ENCODE measurements at regions of chr19 and their contacts with region 1.

Region 1: DNA sequence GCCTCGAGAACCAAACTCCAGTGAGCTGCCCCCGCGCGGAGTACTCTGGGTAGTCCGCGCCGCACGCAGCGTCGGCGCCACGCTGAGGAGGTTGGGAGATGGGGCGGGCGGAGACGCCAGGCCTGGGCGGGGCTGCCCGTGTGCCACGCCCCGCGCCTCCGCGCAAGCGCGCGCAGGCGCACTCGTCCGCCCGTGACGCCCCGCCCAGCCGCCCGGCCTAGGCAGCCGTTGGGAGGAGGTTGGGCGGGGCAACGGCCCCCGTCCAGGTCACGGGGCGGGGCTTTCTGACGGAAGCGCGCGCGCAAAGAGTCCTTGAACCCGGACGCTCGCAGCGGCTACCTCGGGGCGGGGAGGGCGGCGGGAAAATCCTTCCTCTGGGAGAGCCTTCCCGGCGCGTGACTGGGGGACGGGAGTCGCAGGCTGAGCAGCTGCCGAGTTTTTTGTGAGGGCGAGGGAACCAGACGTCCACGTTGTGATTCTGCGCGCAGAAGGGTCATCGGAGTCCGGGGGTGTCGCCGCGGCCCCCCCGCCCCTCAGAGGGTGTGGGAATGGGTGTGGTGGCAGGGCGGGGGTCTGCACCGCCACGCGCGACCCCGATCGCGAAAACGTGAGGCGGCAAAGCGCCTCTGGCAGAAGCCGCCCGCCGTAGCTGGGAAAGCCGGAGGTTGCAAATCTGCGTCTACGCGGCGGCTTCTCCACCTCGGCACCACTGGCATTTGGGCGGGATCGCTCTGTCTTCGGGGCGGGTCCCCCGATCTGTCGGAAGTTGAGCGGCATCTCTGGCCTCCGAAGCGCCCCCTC is at the start of gene MED26:
- DNase-seq: peak; percentile 91 to 95 (median 94)
- H3K4me3 ChIP-seq: peak within 1 kb of the TSS; percentile 82 to 99 (median 89)
- H3K27ac ChIP-seq: peak within 1 kb of the TSS; percentile 77 to 89
- H3K4me1 ChIP-seq: peaks cover 6 to 26% (median 21%) of the 10 kb centered on the region in 4 experiments
- H3K27me3 ChIP-seq: no peaks in the 10 kb centered on the region

Region 2: DNA sequence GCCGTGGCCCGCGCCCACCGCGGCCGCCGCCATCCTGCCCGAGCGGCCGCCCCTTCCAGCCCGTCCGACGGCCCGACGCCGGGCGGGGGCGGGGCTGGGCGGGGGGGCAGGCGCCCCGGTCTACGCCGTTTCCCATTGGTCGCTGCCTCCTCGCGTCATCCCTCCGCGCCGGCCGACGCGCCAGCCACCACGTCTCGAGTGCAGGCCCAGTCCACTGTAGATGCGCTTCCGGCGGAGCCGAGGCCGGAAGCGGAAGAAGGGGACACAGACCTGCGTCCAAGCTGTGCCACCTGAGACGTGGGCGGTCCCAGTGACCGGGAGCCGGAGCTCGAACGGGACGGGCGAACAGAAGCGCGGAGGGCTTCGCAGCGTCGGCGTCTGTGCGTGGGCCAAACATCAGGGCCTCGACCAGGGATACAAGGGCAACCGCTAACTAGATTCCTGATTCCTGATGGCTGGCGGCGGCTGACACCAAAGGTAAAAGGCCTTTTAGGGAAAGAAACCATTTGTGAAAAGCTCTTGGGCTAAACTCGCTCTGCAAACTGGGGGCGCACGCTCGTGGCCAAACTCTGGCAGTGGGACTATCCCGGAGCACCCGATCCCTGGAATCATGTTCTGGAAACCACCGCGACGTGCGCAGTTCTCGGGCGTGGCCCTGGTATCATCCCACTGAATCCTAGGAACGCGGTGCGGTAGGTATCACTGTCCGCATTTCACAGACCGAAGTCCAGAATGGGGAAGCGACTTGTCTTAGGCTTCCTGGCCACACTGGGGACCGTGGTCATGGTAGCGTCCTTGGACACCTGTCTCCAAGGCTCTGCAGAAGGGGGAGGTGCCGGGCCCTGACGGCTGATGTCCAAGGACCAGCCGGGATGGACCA is 55.8 kb before region 1 on chr19 and contains the start of gene SLC35E1:
- CTCF ChIA-PET with region 1: interaction called, 4 read pairs
- POLR2A ChIA-PET with region 1: interaction called, 16 read pairs
- DNase-seq: peak; percentile 92 to 95 (median 93)
- H3K4me3 ChIP-seq: peak within 1 kb of the TSS; percentile 79 to 98 (median 95)
- H3K27ac ChIP-seq: peak within 1 kb of the TSS; percentile 86 to 92
- H3K4me1 ChIP-seq: peaks cover 8 to 37% (median 24%) of the 10 kb centered on the region in 4 experiments
- H3K27me3 ChIP-seq: no peaks in the 10 kb centered on the region